ENCODE measurements at regions of chr12 and their contacts with region 1.

Region 1: DNA sequence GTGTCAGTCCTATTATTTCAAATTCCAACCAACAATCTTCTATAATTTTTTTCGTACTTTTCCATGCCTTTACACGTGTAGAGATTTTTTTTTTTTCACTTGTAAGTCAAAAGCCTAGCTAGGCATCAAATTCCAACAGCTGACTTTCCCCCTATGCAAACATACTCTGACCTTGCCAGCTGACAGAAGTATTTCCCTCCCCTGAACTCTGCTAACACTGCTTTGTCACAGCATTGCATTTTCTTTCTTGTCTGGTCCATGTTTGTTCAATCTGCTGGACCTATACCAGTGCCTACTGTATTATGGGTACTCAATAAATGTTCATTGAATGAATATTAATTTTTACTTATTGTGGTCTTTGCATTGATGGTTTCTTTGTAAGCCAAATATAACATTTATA is 435.3 kb upstream of the GARIN6 start:
- DNase-seq: no peak
- ATAC-seq: no peak

Region 2: GRCh38 chr12:98022961-98023360 is 1189.3 kb before region 1 on chr12:
- intact Hi-C with region 1: loop called (anchors 5 kb)
- DNase-seq: no peak
- ATAC-seq: no peak

Region 3: GRCh38 chr12:99810718-99811593 is 598.7 kb after region 1 on chr12:
- intact Hi-C with region 1: no loop called
- DNase-seq: no peak
- ATAC-seq: peak; percentile 48

Measured in sciatic nerve (tissue), 2 donors.